ENCODE measurements at regions of chr2 and their contacts with region 1.

Region 1: GRCh38 chr2:113756355-113757137 is at the start of gene SLC35F5:
- DNase-seq: peak; percentile 83
- ATAC-seq: peak; percentile 97
- H3K4me3 ChIP-seq: peak within 1 kb of the TSS; percentile 96 to 100 (median 97)
- H3K27ac ChIP-seq: peak within 1 kb of the TSS; percentile 84
- H3K4me1 ChIP-seq: peaks cover 19% of the 10 kb centered on the region
- H3K27me3 ChIP-seq: no peaks in the 10 kb centered on the region; a peak in 1 of 5 replicates
- CTCF ChIP-seq: no peak; the same call in 1 of the 2 replicates
- EP300 ChIP-seq: peak in 1 of 2 experiments; percentile 48; a peak in 2 of 4 replicates
- POLR2A ChIP-seq: peak; percentile 93 to 98
- RAD21 ChIP-seq: peak; percentile 70
- total RNA-seq, gene SLC35F5: 121 and 174 TPM in 2 replicates

Region 2: GRCh38 chr2:113309655-113310387 is 446.7 kb before region 1 on chr2:
- CTCF ChIA-PET with region 1: no interaction called
- POLR2A ChIA-PET with region 1: no interaction called
- in situ Hi-C with region 1: no loop called
- intact Hi-C with region 1: no loop called
- DNase-seq: no peak
- ATAC-seq: no peak
- H3K4me3 ChIP-seq: no peak overlapping the region
- H3K27ac ChIP-seq: no peak overlapping the region
- H3K4me1 ChIP-seq: peaks cover 13% of the 10 kb centered on the region; the same call in 1 of the 2 replicates
- H3K27me3 ChIP-seq: 0 out of 5 replicates have a peak, but pooled peaks cover 0 to 3% of the 10 kb centered on the region in 2 experiments
- CTCF ChIP-seq: no peak
- EP300 ChIP-seq: no peak
- POLR2A ChIP-seq: no peak
- RAD21 ChIP-seq: no peak

Region 3: GRCh38 chr2:113768770-113769169 is 12.2 kb after region 1 on chr2:
- CTCF ChIA-PET with region 1: no interaction called
- POLR2A ChIA-PET with region 1: interaction called, 13 read pairs
- in situ Hi-C with region 1: no loop called
- intact Hi-C with region 1: no loop called
- DNase-seq: no peak
- ATAC-seq: no peak
- H3K4me3 ChIP-seq: no peak overlapping the region
- H3K27ac ChIP-seq: no peak overlapping the region
- H3K4me1 ChIP-seq: peaks cover 7% of the 10 kb centered on the region
- H3K27me3 ChIP-seq: 0 out of 5 replicates have a peak, but pooled peaks cover 0 to 4% of the 10 kb centered on the region in 2 experiments
- CTCF ChIP-seq: no peak
- EP300 ChIP-seq: no peak
- POLR2A ChIP-seq: no peak
- RAD21 ChIP-seq: no peak

Region 4: DNA sequence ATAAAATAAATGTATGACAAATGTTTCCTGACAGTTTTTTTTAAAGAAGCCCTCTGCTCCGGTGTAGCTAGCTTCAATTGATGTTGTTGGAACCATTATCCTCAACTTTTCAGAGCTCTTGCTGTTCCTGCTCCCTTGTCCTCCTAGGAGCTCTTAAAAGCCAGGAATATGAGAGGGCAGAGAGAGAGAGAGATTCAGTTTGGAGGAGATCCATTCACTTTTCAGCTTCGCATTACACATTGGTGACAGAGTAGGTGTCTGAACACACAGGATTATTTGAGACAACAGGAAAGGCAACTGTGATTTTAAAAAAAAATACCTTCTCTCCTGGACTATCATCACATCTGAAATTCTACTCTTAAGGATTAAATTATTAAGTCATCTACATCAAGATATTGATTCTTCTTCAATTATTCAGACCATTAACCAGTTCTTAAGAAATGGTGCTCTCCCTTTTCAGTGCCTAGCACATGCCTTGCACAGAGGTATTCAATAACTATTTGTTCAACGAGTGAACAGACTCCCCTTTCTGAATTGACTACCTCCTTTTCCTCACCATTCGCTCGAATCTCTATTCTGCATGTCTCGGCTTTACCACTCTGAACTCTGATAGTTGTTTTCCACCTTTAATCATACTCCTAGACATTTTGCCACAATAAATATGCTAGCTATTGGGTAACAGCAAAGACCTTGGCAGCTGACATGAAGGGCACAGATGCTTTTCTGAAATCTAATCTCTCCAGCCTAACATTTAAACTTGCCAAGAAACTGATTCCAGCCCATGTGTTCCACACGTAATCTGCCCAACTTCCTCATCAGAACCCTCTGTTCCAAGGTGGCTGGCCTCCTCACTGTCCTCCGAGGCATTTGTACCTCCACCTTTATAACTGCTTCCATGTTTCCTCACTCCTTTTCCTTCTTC is 28.5 kb after region 1 on chr2:
- CTCF ChIA-PET with region 1: no interaction called
- POLR2A ChIA-PET with region 1: no interaction called
- in situ Hi-C with region 1: no loop called
- intact Hi-C with region 1: no loop called
- DNase-seq: no peak
- ATAC-seq: no peak
- H3K4me3 ChIP-seq: no peak overlapping the region
- H3K27ac ChIP-seq: no peak overlapping the region
- H3K4me1 ChIP-seq: no peaks in the 10 kb centered on the region
- H3K27me3 ChIP-seq: peaks cover 0 to 2% of the 10 kb centered on the region in 2 experiments; a peak in 1 of 5 replicates
- CTCF ChIP-seq: no peak
- EP300 ChIP-seq: no peak
- POLR2A ChIP-seq: no peak
- RAD21 ChIP-seq: no peak

Region 5: GRCh38 chr2:113818382-113818951 is 61.9 kb after region 1 on chr2:
- CTCF ChIA-PET with region 1: no interaction called
- POLR2A ChIA-PET with region 1: interaction called, 14 read pairs
- in situ Hi-C with region 1: no loop called
- intact Hi-C with region 1: no loop called
- DNase-seq: peak; percentile 77
- ATAC-seq: peak; percentile 89
- H3K4me3 ChIP-seq: peak overlapping the region in 1 of 3 experiments; percentile 9; a peak in 1 of 6 replicates
- H3K27ac ChIP-seq: no peak overlapping the region
- H3K4me1 ChIP-seq: peaks cover 26% of the 10 kb centered on the region
- H3K27me3 ChIP-seq: no peaks in the 10 kb centered on the region; a peak in 2 of 5 replicates
- CTCF ChIP-seq: no peak
- EP300 ChIP-seq: no peak
- POLR2A ChIP-seq: no peak
- RAD21 ChIP-seq: no peak

Region 6: GRCh38 chr2:113876503-113877387 is 120.2 kb after region 1 on chr2:
- CTCF ChIA-PET with region 1: no interaction called
- POLR2A ChIA-PET with region 1: interaction called, 30 read pairs
- in situ Hi-C with region 1: no loop called
- intact Hi-C with region 1: loop called (anchors 1 kb)
- DNase-seq: peak; percentile 98
- ATAC-seq: peak; percentile 99
- H3K4me3 ChIP-seq: peak overlapping the region; percentile 43 to 53 (median 45)
- H3K27ac ChIP-seq: peak overlapping the region; percentile 25
- H3K4me1 ChIP-seq: peaks cover 34% of the 10 kb centered on the region
- H3K27me3 ChIP-seq: no peaks in the 10 kb centered on the region
- CTCF ChIP-seq: peak; percentile 57
- EP300 ChIP-seq: peak in 1 of 2 experiments; percentile 51; a peak in 1 of 4 replicates
- POLR2A ChIP-seq: no peak
- RAD21 ChIP-seq: peak; percentile 52; the same call in 1 of the 2 replicates

Region 7: GRCh38 chr2:113959202-113959601 is 202.7 kb after region 1 on chr2:
- CTCF ChIA-PET with region 1: no interaction called
- POLR2A ChIA-PET with region 1: interaction called, 3 read pairs
- in situ Hi-C with region 1: loop called (anchors 10 kb)
- intact Hi-C with region 1: no loop called
- DNase-seq: no peak
- ATAC-seq: no peak
- H3K4me3 ChIP-seq: no peak overlapping the region
- H3K27ac ChIP-seq: no peak overlapping the region
- H3K4me1 ChIP-seq: peaks cover 7% of the 10 kb centered on the region; the same call in 1 of the 2 replicates
- H3K27me3 ChIP-seq: no peaks in the 10 kb centered on the region
- CTCF ChIP-seq: no peak
- EP300 ChIP-seq: no peak
- POLR2A ChIP-seq: no peak
- RAD21 ChIP-seq: no peak

Region 8: GRCh38 chr2:113977660-113978523 is 221.3 kb after region 1 on chr2:
- CTCF ChIA-PET with region 1: no interaction called
- POLR2A ChIA-PET with region 1: interaction called, 26 read pairs
- in situ Hi-C with region 1: no loop called
- intact Hi-C with region 1: no loop called
- DNase-seq: peak; percentile 100
- ATAC-seq: peak; percentile 92
- H3K4me3 ChIP-seq: peak overlapping the region in 1 of 3 experiments; percentile 41; a peak in 2 of 6 replicates
- H3K27ac ChIP-seq: peak overlapping the region; percentile 97
- H3K4me1 ChIP-seq: peaks cover 89% of the 10 kb centered on the region
- H3K27me3 ChIP-seq: no peaks in the 10 kb centered on the region
- CTCF ChIP-seq: peak; percentile 92
- EP300 ChIP-seq: peak; percentile 98 to 100
- POLR2A ChIP-seq: peak; percentile 76 to 95
- RAD21 ChIP-seq: peak; percentile 86

Measured in HepG2 (cell line).